ENCODE measurements at regions of chr5 and their contacts with region 1.

Region 1: GRCh38 chr5:180810210-180810958 is 7.8 kb upstream of the MGAT1 start:
- DNase-seq: peak; percentile 94 to 99 (median 98)
- ATAC-seq: peak; percentile 86
- H3K4me3 ChIP-seq: peak overlapping the region; percentile 88
- H3K4me3 Mint-ChIP-seq: peak overlapping the region; percentile 83 to 99 (median 92)
- H3K27ac ChIP-seq: peak overlapping the region; percentile 96
- H3K27ac Mint-ChIP-seq: peak overlapping the region; percentile 91 to 100 (median 98)
- H3K4me1 ChIP-seq: peaks cover 38 to 47% of the 10 kb centered on the region in 2 donors
- H3K4me1 Mint-ChIP-seq: peaks cover 56 to 84% (median 75%) of the 10 kb centered on the region in 7 donors
- H3K27me3 ChIP-seq: no peaks in the 10 kb centered on the region
- H3K27me3 Mint-ChIP-seq: peaks cover 0 to 4% (median 0%) of the 10 kb centered on the region in 5 donors

Region 2: GRCh38 chr5:180494060-180494509 is 316.3 kb before region 1 on chr5 and contains the start of gene CNOT6:
- CTCF ChIA-PET with region 1: no interaction called
- POLR2A ChIA-PET with region 1: no interaction called
- intact Hi-C with region 1: loop called in 1 of 2 experiments (anchors 1 kb)
- DNase-seq: peak; percentile 91 to 98 (median 95)
- ATAC-seq: peak; percentile 98
- H3K4me3 ChIP-seq: peak within 1 kb of the TSS; percentile 83
- H3K4me3 Mint-ChIP-seq: peak within 1 kb of the TSS; percentile 85 to 99 (median 96)
- H3K27ac ChIP-seq: peak within 1 kb of the TSS; percentile 98
- H3K27ac Mint-ChIP-seq: peak within 1 kb of the TSS; percentile 84 to 98 (median 95)
- H3K4me1 ChIP-seq: peaks cover 10 to 27% of the 10 kb centered on the region in 2 donors
- H3K4me1 Mint-ChIP-seq: peaks cover 29 to 42% (median 35%) of the 10 kb centered on the region in 7 donors
- H3K27me3 ChIP-seq: no peaks in the 10 kb centered on the region
- H3K27me3 Mint-ChIP-seq: no peaks in the 10 kb centered on the region
- total RNA-seq, gene CNOT6: 22.8 to 41.9 (median 30.0) TPM

Region 3: DNA sequence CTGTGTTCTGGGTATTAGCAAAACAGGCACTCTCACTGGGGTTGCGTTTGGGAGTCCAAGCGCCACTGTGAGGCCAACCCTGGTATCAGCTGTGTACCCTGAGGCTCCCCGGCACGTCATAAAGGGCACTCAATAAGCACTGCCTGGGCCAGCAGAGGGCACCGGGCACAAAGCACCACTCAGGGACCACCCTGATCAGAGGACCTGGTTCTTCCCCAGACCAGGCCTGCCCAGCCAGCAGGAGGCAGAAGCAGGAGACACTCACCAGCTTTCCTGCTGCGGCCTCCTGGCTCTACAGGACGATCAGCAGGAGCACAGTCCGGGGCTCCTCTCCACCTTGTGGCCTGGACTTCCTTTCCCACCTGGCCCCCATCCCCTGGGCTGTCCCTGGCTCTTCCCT is 20.4 kb before region 1 on chr5:
- CTCF ChIA-PET with region 1: no interaction called
- POLR2A ChIA-PET with region 1: interaction called, 13 read pairs
- intact Hi-C with region 1: no loop called
- DNase-seq: no peak
- ATAC-seq: peak; percentile 70
- H3K4me3 ChIP-seq: no peak overlapping the region
- H3K4me3 Mint-ChIP-seq: no peak overlapping the region
- H3K27ac ChIP-seq: no peak overlapping the region
- H3K27ac Mint-ChIP-seq: peak overlapping the region in 7 of 9 donors; percentile 20 to 75 (median 55)
- H3K4me1 ChIP-seq: peaks cover 7 to 13% of the 10 kb centered on the region in 2 donors
- H3K4me1 Mint-ChIP-seq: peaks cover 38 to 68% (median 60%) of the 10 kb centered on the region in 7 donors
- H3K27me3 ChIP-seq: no peaks in the 10 kb centered on the region
- H3K27me3 Mint-ChIP-seq: no peaks in the 10 kb centered on the region

Region 4: DNA sequence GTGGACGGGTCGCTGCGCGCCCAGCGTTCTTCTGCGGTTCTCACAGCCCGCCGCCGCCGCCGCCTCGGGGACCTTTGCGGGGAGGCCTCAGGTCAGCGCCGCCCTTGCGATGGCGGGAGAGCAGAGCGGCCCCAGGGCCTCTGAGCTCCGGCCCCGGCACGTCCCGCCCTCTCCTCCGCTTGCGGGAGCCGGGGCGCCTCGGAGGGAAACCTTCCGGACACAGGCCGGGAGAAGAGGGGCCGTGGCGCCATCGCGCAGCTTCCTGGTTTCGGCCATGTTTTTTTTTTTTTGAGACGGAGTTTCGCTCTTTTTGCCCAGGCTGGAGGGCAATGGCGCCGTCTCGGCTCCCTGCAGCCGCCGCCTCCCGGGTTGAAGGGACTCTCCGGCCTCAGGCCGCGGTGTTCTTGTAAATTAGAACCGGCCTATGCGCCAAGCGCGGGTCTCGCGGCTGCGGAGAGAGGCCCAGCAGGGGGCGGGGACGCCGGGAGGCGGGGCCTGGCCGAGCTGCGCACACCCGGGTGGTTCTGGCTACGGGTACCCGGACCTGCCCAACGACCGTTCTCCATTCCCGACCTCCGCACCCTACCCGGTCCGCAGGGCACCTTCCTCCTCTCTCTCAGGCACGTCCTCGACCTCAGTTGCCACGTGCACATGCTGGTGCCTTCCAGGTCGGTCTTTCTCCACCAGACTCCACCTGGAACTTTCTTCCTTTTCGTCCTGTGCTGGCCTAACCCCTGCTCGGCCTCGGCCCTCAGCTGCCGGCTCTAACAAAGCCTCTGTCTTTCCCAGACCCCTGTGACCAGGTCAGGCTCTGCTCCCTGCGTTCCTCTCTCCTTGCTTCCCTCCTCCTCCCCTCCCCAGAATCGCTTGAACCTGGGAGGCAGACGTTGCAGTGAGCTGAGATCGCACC is 21.0 kb after region 1 on chr5:
- CTCF ChIA-PET with region 1: interaction called, 9 read pairs
- POLR2A ChIA-PET with region 1: interaction called, 273 read pairs
- intact Hi-C with region 1: loop called (anchors 1 kb)
- DNase-seq: peak; percentile 60 to 85 (median 70)
- ATAC-seq: peak; percentile 76
- H3K4me3 ChIP-seq: peak overlapping the region; percentile 62
- H3K4me3 Mint-ChIP-seq: peak overlapping the region; percentile 97 to 100 (median 98)
- H3K27ac ChIP-seq: peak overlapping the region; percentile 95
- H3K27ac Mint-ChIP-seq: peak overlapping the region; percentile 96 to 100 (median 98)
- H3K4me1 ChIP-seq: peaks cover 29 to 32% of the 10 kb centered on the region in 2 donors
- H3K4me1 Mint-ChIP-seq: peaks cover 35 to 67% (median 58%) of the 10 kb centered on the region in 7 donors
- H3K27me3 ChIP-seq: no peaks in the 10 kb centered on the region
- H3K27me3 Mint-ChIP-seq: no peaks in the 10 kb centered on the region

Region 5: DNA sequence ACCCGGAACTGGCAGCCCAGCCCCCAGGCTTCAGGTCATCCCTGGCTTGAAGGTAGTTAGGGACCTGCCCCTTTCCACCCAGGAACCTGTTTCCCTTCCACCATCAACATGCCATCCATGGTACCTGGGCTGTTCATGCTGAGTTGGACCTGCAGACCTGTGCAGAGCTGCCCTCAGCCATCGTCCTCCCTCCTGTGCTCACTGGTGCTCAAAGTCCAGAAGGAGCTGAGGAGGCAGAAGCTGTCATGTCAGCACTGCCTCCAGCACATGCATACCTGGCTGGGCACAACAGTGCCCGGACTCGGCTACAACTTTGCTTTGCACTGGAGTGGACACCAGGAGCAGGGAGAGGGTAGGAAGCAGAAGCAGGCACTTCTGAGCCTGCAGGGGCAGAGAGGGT is 124.8 kb after region 1 on chr5:
- CTCF ChIA-PET with region 1: no interaction called
- POLR2A ChIA-PET with region 1: no interaction called
- intact Hi-C with region 1: no loop called
- DNase-seq: no peak
- ATAC-seq: no peak
- H3K4me3 ChIP-seq: no peak overlapping the region
- H3K4me3 Mint-ChIP-seq: no peak overlapping the region
- H3K27ac ChIP-seq: no peak overlapping the region
- H3K27ac Mint-ChIP-seq: no peak overlapping the region
- H3K4me1 ChIP-seq: no peaks in the 10 kb centered on the region
- H3K4me1 Mint-ChIP-seq: no peaks in the 10 kb centered on the region
- H3K27me3 ChIP-seq: no peaks in the 10 kb centered on the region
- H3K27me3 Mint-ChIP-seq: peaks cover 0 to 52% (median 23%) of the 10 kb centered on the region in 5 donors

Region 6: GRCh38 chr5:181159286-181159829 is 349.0 kb after region 1 on chr5:
- CTCF ChIA-PET with region 1: no interaction called
- POLR2A ChIA-PET with region 1: no interaction called
- intact Hi-C with region 1: loop called in 1 of 2 experiments (anchors 2 kb)
- DNase-seq: peak; percentile 79 to 95 (median 87)
- ATAC-seq: peak; percentile 80
- H3K4me3 ChIP-seq: no peak overlapping the region
- H3K4me3 Mint-ChIP-seq: peak overlapping the region; percentile 57 to 83 (median 72)
- H3K27ac ChIP-seq: peak overlapping the region; percentile 89
- H3K27ac Mint-ChIP-seq: peak overlapping the region; percentile 73 to 97 (median 94)
- H3K4me1 ChIP-seq: peaks cover 15 to 19% of the 10 kb centered on the region in 2 donors
- H3K4me1 Mint-ChIP-seq: peaks cover 13 to 33% (median 27%) of the 10 kb centered on the region in 7 donors
- H3K27me3 ChIP-seq: no peaks in the 10 kb centered on the region
- H3K27me3 Mint-ChIP-seq: peaks cover 0 to 29% (median 17%) of the 10 kb centered on the region in 5 donors

Region 7: GRCh38 chr5:181223058-181223728 is 412.8 kb after region 1 on chr5 and contains the start of gene TRIM41:
- CTCF ChIA-PET with region 1: no interaction called
- POLR2A ChIA-PET with region 1: interaction called, 7 read pairs
- intact Hi-C with region 1: loop called (anchors 1 kb)
- DNase-seq: peak; percentile 89 to 98 (median 97)
- ATAC-seq: peak; percentile 81
- H3K4me3 ChIP-seq: peak within 1 kb of the TSS; percentile 90
- H3K4me3 Mint-ChIP-seq: peak within 1 kb of the TSS; percentile 89 to 100 (median 98)
- H3K27ac ChIP-seq: peak within 1 kb of the TSS; percentile 95
- H3K27ac Mint-ChIP-seq: peak within 1 kb of the TSS; percentile 98 to 100 (median 100)
- H3K4me1 ChIP-seq: peaks cover 20 to 22% of the 10 kb centered on the region in 2 donors
- H3K4me1 Mint-ChIP-seq: peaks cover 10 to 74% (median 53%) of the 10 kb centered on the region in 7 donors
- H3K27me3 ChIP-seq: no peaks in the 10 kb centered on the region
- H3K27me3 Mint-ChIP-seq: peaks cover 0 to 10% (median 0%) of the 10 kb centered on the region in 5 donors
- total RNA-seq, gene TRIM41: 27.3 to 36.5 (median 32.6) TPM

Region 8: DNA sequence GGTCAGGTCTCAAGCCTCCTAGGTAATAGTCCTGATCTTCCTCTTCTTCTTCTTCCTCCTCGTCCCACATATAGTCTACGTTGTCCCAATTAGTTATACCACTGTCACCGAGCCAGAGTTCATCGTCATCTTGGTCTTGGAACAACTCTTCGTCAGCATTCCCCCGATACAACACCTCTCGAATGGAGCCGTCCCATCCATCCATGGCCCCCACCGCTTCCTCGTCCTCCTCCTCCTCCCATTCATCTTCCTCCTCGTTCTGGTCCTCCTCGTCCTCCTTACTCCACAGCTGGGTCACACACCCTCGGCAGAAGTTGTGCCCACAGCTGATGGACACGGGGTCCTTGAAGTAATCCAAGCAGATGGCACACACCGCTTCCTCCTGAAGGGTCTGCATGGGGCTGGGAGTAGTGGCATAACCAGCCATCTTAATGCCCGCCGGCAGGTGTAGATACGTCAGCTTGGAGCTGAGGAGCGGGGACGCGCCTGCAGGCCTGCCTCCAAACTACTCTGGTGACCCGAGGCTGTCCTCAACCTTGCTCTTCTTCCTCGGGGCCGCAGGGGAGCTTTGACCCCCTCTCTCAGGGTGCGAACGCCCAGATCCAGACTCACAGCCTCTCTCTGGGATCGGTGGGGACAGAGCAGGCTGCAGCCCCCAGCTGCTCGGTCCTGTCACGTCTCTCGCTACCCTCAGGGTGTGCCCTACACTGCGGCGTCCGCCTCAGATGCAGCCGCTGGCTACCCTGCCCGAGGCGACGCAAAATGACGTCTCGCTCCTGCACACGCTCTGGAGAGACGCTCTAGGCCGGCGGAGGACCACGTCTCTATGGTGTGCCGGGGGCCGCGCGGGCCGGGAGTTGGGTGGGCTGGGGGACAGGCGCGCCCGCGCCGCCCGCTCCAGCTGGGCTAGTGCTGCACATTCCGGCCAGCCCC is 450.3 kb after region 1 on chr5 and contains the start of gene TRIM52:
- CTCF ChIA-PET with region 1: no interaction called
- POLR2A ChIA-PET with region 1: interaction called, 3 read pairs
- intact Hi-C with region 1: loop called (anchors 2 kb)
- DNase-seq: peak; percentile 79 to 91 (median 90)
- ATAC-seq: peak; percentile 93
- H3K4me3 ChIP-seq: peak within 1 kb of the TSS; percentile 93
- H3K4me3 Mint-ChIP-seq: peak within 1 kb of the TSS; percentile 94 to 100 (median 98)
- H3K27ac ChIP-seq: peak within 1 kb of the TSS; percentile 97
- H3K27ac Mint-ChIP-seq: peak within 1 kb of the TSS; percentile 95 to 99 (median 98)
- H3K4me1 ChIP-seq: peaks cover 31 to 39% of the 10 kb centered on the region in 2 donors
- H3K4me1 Mint-ChIP-seq: peaks cover 34 to 60% (median 56%) of the 10 kb centered on the region in 7 donors
- H3K27me3 ChIP-seq: no peaks in the 10 kb centered on the region
- H3K27me3 Mint-ChIP-seq: no peaks in the 10 kb centered on the region
- total RNA-seq, gene TRIM52: 31.4 to 71.6 (median 35.7) TPM